ENCODE measurements at regions of chr11 and their contacts with region 1.

Region 1: GRCh38 chr11:64358907-64359711 is at the start of gene RPS6KA4:
- DNase-seq: no peak
- ATAC-seq: peak; percentile 65
- H3K4me3 ChIP-seq: peak within 1 kb of the TSS; percentile 84 to 97
- H3K27ac ChIP-seq: peak within 1 kb of the TSS; percentile 87
- H3K4me1 ChIP-seq: peaks cover 28 to 61% of the 10 kb centered on the region in 2 experiments
- H3K27me3 ChIP-seq: no peaks in the 10 kb centered on the region
- CTCF ChIP-seq: no peak
- POLR2A ChIP-seq: peak; percentile 68
- RAD21 ChIP-seq: no peak
- total RNA-seq, gene RPS6KA4: 67.3 TPM

Region 2: DNA sequence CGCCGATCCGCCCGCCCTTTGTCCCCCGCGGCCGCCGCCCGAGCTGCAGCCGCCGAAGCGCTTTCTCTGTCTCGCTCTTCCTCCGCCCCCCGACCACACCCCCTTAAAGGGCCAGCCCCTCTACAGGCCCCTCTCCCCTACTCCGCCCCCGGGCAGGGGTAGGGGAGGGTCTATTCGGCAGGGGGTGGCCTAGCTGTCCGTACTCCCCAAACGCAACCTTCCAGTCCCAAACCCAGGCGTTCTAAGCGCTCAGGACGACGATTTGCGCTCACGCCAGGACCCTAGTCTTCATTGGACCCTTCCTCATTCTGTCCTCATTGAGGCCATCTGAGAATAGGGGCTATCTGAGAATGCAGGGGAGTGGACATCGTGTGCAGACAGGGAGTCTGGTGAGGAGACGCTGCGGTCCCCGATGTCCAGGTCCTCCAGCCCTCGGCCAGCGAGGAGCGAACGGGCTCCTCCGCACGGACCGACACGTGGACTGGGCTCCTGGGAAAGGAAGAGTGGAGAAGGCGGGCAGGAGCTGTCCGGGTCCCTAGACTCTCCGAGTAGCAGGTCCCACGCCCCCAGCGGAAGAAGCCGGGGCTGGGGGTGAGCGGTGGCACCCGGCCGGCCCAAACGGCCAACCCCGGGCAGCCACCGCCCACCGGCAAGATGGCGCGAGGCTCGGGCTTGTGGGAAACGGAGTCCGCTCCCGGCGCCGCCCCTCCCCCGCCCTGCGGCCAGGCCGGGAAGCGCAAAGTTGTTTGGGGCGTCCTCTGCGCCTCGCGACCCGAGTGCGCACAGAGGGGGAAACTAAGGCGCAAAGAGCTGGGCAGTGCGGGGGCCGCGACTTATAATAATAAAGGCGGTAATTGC is 112.0 kb before region 1 on chr11 and contains the start of gene PPP1R14B:
- CTCF ChIA-PET with region 1: interaction called, 15 read pairs
- POLR2A ChIA-PET with region 1: no interaction called
- RAD21 ChIA-PET with region 1: no interaction called
- intact Hi-C with region 1: no loop called
- DNase-seq: no peak
- ATAC-seq: peak; percentile 50
- H3K4me3 ChIP-seq: peak within 1 kb of the TSS; percentile 99 to 100
- H3K27ac ChIP-seq: peak within 1 kb of the TSS; percentile 94
- H3K4me1 ChIP-seq: peaks cover 36 to 76% of the 10 kb centered on the region in 2 experiments
- H3K27me3 ChIP-seq: no peaks in the 10 kb centered on the region
- CTCF ChIP-seq: no peak
- POLR2A ChIP-seq: peak; percentile 42
- RAD21 ChIP-seq: no peak
- total RNA-seq, gene PPP1R14B: 332 TPM

Region 3: GRCh38 chr11:64317957-64318693 is 41.0 kb before region 1 on chr11 and contains the start of gene PRDX5:
- CTCF ChIA-PET with region 1: interaction called, 92 read pairs
- POLR2A ChIA-PET with region 1: interaction called, 18 read pairs
- RAD21 ChIA-PET with region 1: interaction called, 13 to 29 read pairs
- intact Hi-C with region 1: loop called (anchors 1 kb)
- DNase-seq: peak; percentile 94
- ATAC-seq: peak; percentile 82
- H3K4me3 ChIP-seq: peak within 1 kb of the TSS; percentile 80 to 84
- H3K27ac ChIP-seq: peak within 1 kb of the TSS; percentile 83
- H3K4me1 ChIP-seq: peaks cover 22 to 63% of the 10 kb centered on the region in 2 experiments
- H3K27me3 ChIP-seq: no peaks in the 10 kb centered on the region
- CTCF ChIP-seq: peak in 2 of 3 experiments; percentile 28 to 38; a peak in 3 of 6 replicates
- POLR2A ChIP-seq: no peak
- RAD21 ChIP-seq: no peak
- total RNA-seq, gene PRDX5: 267 TPM

Region 4: DNA sequence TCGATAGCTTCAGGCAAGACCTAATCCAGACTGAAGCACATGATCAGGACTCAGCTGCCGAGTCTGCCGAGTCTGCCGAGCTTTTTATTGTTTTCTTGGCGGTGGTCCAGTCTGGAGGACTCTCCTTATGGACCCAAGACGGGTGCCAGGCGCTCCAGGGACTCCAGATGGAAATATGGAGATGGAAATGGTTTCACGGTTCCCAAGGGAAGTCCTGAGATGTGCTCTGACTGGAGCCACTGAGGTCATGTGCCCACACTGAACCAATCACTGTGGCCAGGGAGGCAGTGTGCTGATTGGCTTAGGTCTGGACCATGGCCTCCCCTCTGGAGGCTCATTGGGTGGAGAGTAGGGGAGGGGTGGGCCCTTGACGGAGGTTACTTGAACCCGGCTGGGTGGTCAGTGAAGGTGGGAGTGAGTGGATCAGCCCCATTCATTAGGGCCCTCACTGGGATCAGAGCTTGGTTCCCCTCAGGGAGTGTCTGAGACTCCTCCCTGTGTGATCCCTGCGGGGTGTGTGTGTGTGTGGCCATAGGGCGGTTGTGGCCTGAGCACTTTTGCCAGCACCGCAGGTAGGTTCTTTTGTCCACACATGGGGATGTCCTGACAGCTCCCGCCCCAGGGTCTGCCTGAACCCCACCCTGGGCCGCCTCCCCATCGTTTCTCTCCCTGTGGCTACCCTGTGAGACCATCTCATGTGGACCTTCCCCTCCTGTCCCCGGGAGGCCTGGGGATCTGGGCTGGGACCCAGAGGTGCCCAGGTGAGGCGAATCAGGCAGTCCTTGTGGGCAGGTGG is 13.9 kb after region 1 on chr11:
- CTCF ChIA-PET with region 1: interaction called, 11 read pairs
- POLR2A ChIA-PET with region 1: interaction called, 12 read pairs
- RAD21 ChIA-PET with region 1: no interaction called
- intact Hi-C with region 1: no loop called
- DNase-seq: peak; percentile 92
- ATAC-seq: peak; percentile 100
- H3K4me3 ChIP-seq: peak overlapping the region; percentile 69 to 72
- H3K27ac ChIP-seq: peak overlapping the region; percentile 48
- H3K4me1 ChIP-seq: peaks cover 0 to 15% of the 10 kb centered on the region in 2 experiments; a peak in 3 of 4 replicates
- H3K27me3 ChIP-seq: no peaks in the 10 kb centered on the region
- CTCF ChIP-seq: no peak
- POLR2A ChIP-seq: peak; percentile 62
- RAD21 ChIP-seq: no peak

Region 5: DNA sequence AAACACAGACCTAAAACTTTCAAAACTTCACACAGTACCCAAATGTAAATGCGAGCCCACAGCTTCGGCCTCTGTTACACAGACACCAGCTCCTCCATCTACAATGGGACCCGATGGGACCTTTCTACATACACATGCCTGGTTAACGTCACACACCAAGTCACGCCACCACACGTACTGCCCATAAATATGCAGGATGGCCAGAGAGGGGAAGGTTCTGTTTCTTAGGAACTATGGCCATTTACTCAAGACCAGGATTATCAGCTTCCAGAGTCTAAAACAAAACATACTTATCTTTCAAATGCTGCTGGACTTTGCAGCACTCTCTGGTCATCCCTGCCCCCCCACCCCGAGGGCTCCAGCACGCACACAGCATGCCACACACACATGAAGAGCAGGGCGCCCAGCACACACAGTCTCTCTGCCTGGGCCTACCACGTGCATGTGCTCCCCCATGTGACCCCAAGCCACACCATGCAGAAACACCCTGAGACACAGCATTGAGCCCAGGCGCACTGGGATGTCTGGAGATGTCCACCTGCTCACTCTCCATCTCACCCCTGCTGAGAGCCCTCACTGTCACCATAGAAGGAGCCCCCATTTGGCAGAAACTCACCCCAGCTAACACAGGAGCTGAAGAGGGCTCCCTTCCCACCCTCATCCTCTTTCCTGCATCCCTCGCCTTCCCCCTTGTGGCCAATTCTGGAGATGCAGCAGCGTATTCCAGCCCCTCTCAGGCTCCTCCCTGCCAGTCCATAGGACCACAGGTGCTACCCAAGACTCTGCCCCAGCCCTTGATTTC is 293.7 kb after region 1 on chr11:
- CTCF ChIA-PET with region 1: interaction called, 76 read pairs
- POLR2A ChIA-PET with region 1: interaction called, 4 read pairs
- RAD21 ChIA-PET with region 1: interaction called in 1 of 2 experiments, 8 read pairs
- intact Hi-C with region 1: loop called (anchors 5 kb)
- DNase-seq: peak; percentile 63
- ATAC-seq: peak; percentile 91
- H3K4me3 ChIP-seq: no peak overlapping the region
- H3K27ac ChIP-seq: no peak overlapping the region
- H3K4me1 ChIP-seq: peaks cover 0 to 9% of the 10 kb centered on the region in 2 experiments; a peak in 3 of 4 replicates
- H3K27me3 ChIP-seq: no peaks in the 10 kb centered on the region
- CTCF ChIP-seq: peak; percentile 88 to 96 (median 89)
- POLR2A ChIP-seq: no peak
- RAD21 ChIP-seq: peak; percentile 93

Measured in HCT116 (cell line).